Activated CD8-positive, alpha-beta T cell treated with anti-CD3 and anti-CD28 coated beads, Interleukin-2, amount 10 ng/mL, durations not matched to agents 7 days and 5 days (primary cell): ENCODE measurements at regions of chr6 and their contacts with region 1.

Region 1: GRCh38 chr6:119060255-119060907 is 18.1 kb downstream of the FAM184A start:
- DNase-seq: no peak
- ATAC-seq: no peak
- H3K4me3 Mint-ChIP-seq: no peak overlapping the region
- H3K27ac Mint-ChIP-seq: no peak overlapping the region
- H3K4me1 Mint-ChIP-seq: no peaks in the 10 kb centered on the region
- H3K27me3 Mint-ChIP-seq: no peaks in the 10 kb centered on the region

Region 2: DNA sequence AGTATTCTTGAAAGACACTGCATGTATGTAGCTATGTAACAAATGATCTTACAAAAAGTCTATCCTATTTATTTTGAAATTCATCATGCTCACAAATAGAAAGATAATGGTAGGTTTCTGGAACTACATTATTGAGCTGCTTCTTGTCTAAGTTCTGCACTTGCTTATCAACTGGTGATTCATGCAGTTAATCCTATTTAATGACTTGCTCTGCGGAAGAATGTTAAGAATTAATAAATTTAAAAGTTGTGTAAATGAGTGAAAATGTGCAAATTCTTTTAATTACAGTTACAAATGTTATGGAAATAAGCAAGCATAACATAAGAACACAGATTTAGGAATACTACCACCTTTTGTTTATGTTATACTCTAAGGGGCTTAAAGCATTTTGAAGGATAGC is 58.3 kb before region 1 on chr6:
- CTCF ChIA-PET with region 1: no interaction called
- POLR2A ChIA-PET with region 1: no interaction called
- DNase-seq: no peak
- ATAC-seq: no peak
- H3K4me3 Mint-ChIP-seq: no peak overlapping the region
- H3K27ac Mint-ChIP-seq: no peak overlapping the region
- H3K4me1 Mint-ChIP-seq: no peaks in the 10 kb centered on the region
- H3K27me3 Mint-ChIP-seq: no peaks in the 10 kb centered on the region

Region 3: DNA sequence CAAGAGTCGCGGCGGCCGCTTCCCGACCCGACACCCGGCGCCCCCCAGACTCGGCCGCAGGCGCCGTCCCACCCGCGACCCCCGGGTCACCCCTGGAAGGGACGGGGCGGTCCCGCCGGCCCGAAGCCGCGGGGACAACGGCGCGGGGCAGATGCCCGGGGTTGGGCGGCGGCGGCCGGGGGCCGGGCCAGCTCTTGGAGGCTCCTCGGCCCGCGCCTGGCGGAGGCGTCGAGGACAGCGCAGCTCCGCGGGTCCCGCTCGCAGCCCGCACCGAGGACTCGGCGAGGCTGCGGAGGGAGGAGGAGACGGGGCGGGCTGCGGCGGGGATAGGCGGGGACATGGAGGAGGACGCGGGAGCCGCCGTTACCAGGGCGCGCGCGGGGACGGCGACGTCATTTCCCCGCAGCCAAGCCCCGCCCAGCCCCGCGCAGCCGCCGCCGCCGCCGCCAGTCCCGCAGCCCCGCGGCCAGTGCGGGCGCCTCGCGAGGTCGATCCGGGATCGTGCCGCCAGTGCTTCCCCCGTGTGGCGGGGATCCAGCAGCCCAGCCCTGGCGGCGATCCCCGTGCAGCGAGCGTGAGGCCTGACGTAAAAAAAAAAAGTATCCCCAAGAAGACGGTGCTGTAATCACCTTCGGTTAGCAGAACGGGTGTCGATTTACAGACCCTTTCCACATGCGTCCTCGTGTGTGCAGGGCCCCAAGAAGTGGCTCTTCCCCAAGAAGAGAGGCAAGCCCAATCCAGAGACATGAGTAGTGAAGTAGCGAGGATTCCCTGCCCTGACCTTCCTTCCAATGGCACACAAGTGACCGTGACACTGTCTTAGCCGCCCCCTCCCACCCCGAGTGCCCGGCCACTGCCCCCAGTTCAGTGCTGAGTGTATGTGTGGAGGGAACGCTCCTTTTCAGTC is 18.2 kb after region 1 on chr6 and contains the start of gene FAM184A:
- CTCF ChIA-PET with region 1: interaction called, 12 read pairs
- POLR2A ChIA-PET with region 1: no interaction called
- DNase-seq: peak; percentile 73
- ATAC-seq: peak; percentile 83
- H3K4me3 Mint-ChIP-seq: peak within 1 kb of the TSS; percentile 77
- H3K27ac Mint-ChIP-seq: peak within 1 kb of the TSS; percentile 53
- H3K4me1 Mint-ChIP-seq: peaks cover 24% of the 10 kb centered on the region
- H3K27me3 Mint-ChIP-seq: peaks cover 15% of the 10 kb centered on the region
- total RNA-seq, gene FAM184A: 2.2 to 2.7 TPM